Activated T-helper 1 cell treated with anti-CD3 and anti-CD28 coated beads, Interleukin-12 subunit alpha, Interleukin-12 subunit beta, Interleukin-2, Interleukin-4 antibody, amounts not matched to agents 30 ng/mL and 10 ng/mL and 1 ng/mL, durations not matched to agents 14 hours and 24 hours and 36 hours (primary cell): ENCODE measurements at regions of chr6 and their contacts with region 1.

Region 1: DNA sequence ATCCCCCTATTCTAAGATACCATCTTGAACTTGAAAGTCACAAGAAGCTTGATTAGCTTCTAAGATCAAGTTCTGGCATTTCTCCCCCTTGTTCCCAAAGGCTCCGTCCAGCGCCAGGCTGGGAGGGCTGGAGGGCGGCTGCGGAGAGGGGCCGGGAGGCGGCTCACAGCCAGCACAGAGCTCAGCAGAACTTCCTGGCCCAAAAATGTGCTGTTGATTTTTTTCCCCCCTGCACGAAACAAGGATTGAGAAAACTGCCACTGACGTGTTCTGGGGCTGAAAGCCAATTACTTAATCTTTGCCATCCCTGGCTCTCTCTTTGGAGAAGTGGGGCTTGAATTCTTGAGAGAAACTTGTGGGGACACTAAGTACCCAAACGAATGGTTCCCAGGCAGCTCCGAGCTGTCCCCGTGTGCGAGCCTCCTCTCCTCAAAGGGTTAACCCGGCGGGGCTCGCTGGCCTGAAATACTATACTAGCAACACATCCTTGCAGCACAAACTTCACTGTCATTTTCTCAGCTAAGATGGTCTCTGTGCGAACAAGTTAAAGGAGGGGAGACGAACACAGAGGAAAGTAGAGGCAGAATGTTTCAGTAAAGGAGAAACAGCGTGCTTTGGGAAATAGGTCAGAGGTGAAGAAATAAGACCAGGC is 452 bp downstream of the TRAF3IP2 start:
- DNase-seq: peak; percentile 11
- H3K4me3 Mint-ChIP-seq: peak overlapping the region; percentile 90
- H3K27ac Mint-ChIP-seq: peak overlapping the region; percentile 100
- H3K4me1 Mint-ChIP-seq: peaks cover 56% of the 10 kb centered on the region
- H3K27me3 Mint-ChIP-seq: no peaks in the 10 kb centered on the region

Region 2: DNA sequence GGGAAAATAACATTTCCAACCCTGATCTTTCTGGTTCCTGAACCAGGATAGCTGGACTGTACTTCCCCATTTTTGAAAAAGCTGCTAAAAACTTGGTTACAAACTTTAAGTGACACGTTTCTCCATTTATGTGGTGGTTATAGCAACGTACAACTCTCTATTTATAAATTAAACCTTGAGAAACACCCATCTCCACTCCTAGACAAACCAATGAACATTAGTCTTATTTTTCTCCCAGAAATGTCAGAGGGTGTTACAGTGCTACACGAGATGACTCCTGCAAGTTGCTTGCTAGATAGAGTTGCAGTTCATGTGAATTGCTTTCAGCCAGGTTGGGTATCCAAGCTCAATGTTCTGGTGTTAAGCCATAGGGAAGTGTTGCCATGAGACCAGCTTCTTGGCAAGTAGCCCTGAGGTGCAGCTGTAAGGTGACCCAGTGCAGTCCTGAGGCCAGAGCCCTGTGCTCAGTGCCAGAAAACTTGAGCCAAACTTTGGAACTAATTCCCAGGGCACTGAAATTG is 70.9 kb before region 1 on chr6:
- intact Hi-C with region 1: loop called (anchors 2 kb)
- DNase-seq: no peak
- H3K4me3 Mint-ChIP-seq: no peak overlapping the region
- H3K27ac Mint-ChIP-seq: no peak overlapping the region
- H3K4me1 Mint-ChIP-seq: peaks cover 49% of the 10 kb centered on the region
- H3K27me3 Mint-ChIP-seq: no peaks in the 10 kb centered on the region

Region 3: DNA sequence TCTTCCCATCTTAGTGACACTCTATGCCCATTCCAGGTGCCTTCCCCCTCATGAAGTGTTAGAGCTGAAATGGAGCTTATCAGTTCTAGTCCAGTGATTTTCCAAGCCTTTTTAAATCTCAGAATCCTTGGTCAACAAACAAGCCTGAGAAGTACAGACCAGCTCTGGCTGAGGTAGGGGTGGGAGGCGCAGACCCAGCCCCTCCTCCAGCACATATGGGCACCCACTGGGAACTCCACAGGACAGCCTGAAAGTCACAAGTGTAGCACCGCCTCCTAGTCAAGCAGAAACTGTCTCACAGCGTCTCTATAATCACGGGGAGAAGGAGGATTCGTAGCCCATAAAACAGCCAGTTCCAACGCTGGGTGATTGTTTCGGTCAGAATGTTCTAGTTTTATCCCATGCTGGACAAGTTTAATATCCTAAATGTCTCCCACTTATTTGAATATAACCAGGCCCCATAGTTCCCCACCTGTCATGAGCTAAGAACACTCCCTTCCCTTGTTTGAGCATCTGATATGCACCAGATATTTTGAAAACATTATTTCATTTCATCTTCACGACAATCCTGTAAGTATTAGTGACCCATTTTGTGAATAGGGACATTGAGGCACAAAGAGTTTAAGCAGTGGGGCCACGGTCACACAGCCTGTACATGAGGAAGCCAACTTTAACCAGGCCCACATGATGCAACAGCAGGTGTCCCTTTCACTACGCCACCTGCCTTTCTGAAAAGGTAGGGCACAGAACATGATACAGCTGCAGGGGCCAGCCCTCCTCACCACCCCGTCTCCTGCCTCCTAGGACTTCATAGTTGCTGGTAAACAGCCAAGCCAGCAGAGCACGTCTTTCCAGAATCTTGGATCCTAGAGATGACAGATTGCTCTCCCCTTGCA is 39.7 kb before region 1 on chr6:
- intact Hi-C with region 1: loop called (anchors 2 kb)
- DNase-seq: no peak
- H3K4me3 Mint-ChIP-seq: no peak overlapping the region
- H3K27ac Mint-ChIP-seq: peak overlapping the region; percentile 83
- H3K4me1 Mint-ChIP-seq: peaks cover 48% of the 10 kb centered on the region
- H3K27me3 Mint-ChIP-seq: no peaks in the 10 kb centered on the region

Region 4: GRCh38 chr6:111580826-111581505 is 24.3 kb before region 1 on chr6:
- intact Hi-C with region 1: no loop called
- DNase-seq: no peak
- H3K4me3 Mint-ChIP-seq: no peak overlapping the region
- H3K27ac Mint-ChIP-seq: peak overlapping the region; percentile 16
- H3K4me1 Mint-ChIP-seq: peaks cover 19% of the 10 kb centered on the region
- H3K27me3 Mint-ChIP-seq: no peaks in the 10 kb centered on the region

Region 5: DNA sequence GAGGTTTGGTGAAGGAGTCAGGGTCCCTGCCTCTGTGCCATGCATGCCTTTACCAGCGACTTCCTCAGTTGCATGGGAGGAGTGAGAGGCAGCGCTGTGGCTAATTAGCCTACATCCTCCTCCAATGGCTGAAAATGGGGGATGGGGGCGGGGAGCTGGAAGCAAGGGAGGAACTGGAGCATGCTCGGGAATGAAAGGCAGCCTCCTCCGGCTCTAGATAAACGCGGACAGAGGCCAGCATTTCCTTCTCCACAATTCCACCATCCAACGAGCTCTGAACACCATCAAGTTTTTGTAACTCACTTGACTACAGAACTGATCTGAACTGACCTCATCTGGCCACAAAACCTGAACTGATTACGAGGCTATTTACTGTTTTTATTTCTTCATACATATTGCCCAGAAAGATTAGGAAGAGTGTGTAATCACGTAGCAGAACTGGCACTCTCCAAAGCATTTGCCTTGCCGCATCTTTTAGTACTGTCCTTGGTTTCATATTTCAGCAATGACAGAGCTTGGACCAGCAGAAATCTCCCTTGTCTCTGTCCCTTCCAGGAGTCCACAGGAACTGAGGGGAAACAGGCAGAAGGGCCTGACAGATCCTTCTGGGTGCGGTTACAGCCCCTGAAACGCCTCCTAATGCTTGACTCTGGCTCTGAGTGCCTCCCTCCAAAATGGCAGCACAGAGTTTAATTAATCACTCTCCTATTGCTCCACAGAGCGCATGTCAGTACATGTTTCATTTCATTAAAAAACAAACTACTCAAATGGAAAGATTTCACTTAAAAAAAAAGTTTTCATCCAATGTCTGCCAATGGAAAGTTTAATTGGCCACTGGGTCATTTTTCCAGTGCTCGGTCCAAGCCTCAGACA is 58.7 kb after region 1 on chr6:
- intact Hi-C with region 1: loop called (anchors 5 kb)
- DNase-seq: no peak
- H3K4me3 Mint-ChIP-seq: no peak overlapping the region
- H3K27ac Mint-ChIP-seq: no peak overlapping the region
- H3K4me1 Mint-ChIP-seq: no peaks in the 10 kb centered on the region
- H3K27me3 Mint-ChIP-seq: no peaks in the 10 kb centered on the region

Region 6: DNA sequence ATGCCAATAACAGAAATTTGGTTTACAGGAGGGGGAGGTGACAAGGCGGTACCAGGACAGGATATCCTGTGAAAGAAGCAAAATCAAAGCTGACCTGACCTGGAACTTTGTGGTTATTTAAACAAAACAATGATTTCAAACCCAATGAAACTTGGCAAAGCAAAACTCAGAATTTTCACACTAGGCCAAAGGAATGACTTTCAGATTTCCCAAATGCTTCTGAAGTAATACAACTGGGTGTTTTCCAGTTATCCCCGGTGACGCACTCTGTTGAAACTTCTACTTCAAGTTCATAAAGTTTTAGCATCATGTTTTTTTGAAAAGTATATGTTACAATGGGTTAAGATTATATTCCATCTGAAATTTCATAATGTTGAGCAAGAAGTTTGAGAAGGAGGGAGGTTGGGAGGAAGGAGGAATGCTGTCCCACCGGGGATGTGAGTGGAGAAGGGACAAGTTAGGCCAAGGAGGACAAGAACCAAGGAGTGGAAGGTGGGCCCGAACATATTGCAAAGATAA is 78.6 kb after region 1 on chr6:
- intact Hi-C with region 1: no loop called
- DNase-seq: no peak
- H3K4me3 Mint-ChIP-seq: no peak overlapping the region
- H3K27ac Mint-ChIP-seq: peak overlapping the region; percentile 68
- H3K4me1 Mint-ChIP-seq: peaks cover 31% of the 10 kb centered on the region
- H3K27me3 Mint-ChIP-seq: no peaks in the 10 kb centered on the region